HEK293 (cell line): ENCODE measurements at regions of chr18 and their contacts with region 1.

Region 1: GRCh38 chr18:35005963-35006577 is 35.1 kb upstream of the MAPRE2 start:
- H3K4me3 ChIP-seq: no peak overlapping the region
- H3K27ac ChIP-seq: no peak overlapping the region
- H3K4me1 ChIP-seq: no peaks in the 10 kb centered on the region
- CTCF ChIP-seq: peak; percentile 50

Region 2: DNA sequence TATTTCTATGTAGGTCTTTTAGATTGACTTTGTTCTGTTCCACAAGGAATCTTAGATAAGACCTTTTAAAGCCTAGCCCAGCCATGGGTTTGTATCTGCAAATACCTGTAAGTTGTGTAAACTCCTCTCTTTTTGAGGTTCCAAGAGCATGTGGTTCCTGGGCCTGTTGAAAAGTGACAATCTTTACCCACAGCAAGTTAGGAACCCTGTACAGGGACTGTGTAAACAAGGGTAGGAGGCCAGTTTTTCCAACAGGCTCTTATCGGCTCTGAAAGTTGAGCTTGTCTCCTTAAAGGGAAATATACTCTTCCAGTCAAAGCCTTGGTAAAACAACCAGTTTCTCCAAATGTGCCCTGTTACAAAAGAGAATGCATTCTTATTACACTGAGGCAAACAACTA is 1443.3 kb before region 1 on chr18:
- CTCF ChIA-PET with region 1: no interaction called
- POLR2A ChIA-PET with region 1: no interaction called
- H3K4me3 ChIP-seq: no peak overlapping the region
- H3K27ac ChIP-seq: no peak overlapping the region
- H3K4me1 ChIP-seq: no peaks in the 10 kb centered on the region
- CTCF ChIP-seq: no peak

Region 3: DNA sequence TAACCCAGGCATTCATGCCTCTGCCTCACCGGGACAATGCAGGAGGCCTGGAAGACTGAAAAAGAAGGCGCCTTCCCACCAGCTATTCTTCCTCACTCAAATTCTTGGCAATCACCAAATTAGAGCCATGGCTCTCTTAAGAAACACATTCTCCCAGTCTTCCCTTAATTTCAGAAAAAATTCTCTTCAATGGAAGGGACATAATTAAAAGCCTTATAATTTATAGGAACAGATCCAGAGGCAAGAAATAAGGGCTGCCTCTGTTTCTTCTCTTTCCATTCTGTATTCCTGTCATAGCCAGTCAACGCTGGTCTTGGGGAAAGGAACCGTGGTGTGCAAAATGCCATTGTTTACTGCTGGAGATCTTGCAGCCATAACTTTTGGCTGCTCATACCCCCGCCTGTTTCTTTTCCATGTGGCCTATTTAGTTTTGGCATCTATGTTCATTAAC is 263.2 kb before region 1 on chr18:
- CTCF ChIA-PET with region 1: no interaction called
- POLR2A ChIA-PET with region 1: no interaction called
- H3K4me3 ChIP-seq: no peak overlapping the region
- H3K27ac ChIP-seq: no peak overlapping the region
- H3K4me1 ChIP-seq: peaks cover 15% of the 10 kb centered on the region
- CTCF ChIP-seq: no peak

Region 4: DNA sequence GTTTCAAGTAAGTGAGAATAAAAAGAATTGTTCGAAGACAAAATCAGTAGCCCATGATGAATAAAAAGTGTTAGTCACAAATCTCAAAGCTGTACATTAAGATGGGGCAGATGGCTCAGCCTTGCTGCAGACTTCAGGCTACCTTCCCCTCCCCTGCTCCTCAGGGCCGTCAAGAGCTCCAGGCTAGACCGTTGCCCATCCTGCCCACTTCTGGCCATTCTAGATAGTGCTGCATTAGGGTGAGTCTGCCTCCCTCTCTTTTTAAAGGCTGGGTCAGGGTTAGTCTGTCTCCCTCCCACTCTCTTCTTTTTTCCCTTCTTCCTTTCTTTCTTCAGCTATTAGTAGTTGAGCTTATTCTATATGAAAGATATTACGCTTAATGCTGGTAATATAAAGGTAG is 121.1 kb after region 1 on chr18:
- CTCF ChIA-PET with region 1: interaction called, 14 read pairs
- POLR2A ChIA-PET with region 1: no interaction called
- H3K4me3 ChIP-seq: no peak overlapping the region
- H3K27ac ChIP-seq: no peak overlapping the region
- H3K4me1 ChIP-seq: no peaks in the 10 kb centered on the region
- CTCF ChIP-seq: no peak